Left colon (tissue), 2 donors: ENCODE measurements at regions of chr3 and their contacts with region 1.

Region 1: GRCh38 chr3:196969660-196970546 is 1.3 kb upstream of the PIGZ start:
- DNase-seq: peak in 1 of 2 donors; percentile 76
- ATAC-seq: peak; percentile 66

Region 2: DNA sequence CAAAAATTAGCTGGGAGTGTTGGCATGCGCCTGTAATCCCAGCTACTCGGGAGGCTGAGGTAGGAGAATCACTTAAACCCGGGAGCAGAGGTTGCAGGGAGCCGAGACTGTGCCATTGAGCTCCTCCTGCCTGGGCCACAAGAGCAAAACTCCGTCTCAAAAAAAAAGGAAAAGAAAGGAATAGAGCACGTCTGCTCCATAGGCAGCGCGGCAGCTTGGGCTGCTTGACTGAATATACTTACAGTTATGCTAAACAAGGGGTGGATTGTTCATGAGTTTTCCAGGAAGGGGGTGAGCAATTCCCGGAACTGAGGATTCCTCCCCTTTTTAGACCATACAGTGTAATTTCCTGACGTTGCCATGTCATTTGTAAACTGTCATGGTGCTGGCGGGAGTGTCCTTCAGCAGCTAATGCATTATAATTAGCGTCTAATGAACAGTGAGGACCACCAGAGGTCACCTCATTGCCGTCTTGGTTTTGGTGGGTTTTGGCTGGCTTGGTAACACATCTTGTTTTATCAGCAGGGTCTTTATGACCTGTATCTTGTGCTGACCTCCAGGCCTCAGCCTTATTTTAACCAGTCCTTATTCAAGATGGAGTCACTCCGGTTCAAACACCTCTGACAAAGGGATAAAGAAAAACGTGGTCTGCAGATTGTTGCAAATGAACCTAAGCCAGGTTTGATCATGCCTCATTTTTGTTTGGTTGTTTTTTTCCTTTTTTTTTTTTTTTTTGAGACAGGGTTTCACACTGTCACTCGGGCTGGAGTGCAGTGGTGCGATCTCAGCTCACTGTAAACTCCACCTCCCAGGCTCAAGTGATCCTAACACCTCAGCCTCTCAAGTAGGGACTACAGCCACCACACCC is 127.1 kb before region 1 on chr3:
- intact Hi-C with region 1: loop called in 1 of 2 experiments (anchors 10 kb)
- DNase-seq: no peak
- ATAC-seq: no peak